ENCODE measurements at regions of chrX and their contacts with region 1.

Region 1: GRCh38 chrX:121308276-121308805 is 260.9 kb downstream of the GLUD2 start:
- DNase-seq: peak; percentile 78
- H3K4me3 Mint-ChIP-seq: peak overlapping the region; percentile 48
- H3K27ac Mint-ChIP-seq: peak overlapping the region; percentile 87
- H3K4me1 Mint-ChIP-seq: peaks cover 24% of the 10 kb centered on the region
- H3K27me3 Mint-ChIP-seq: peaks cover 2% of the 10 kb centered on the region

Region 2: DNA sequence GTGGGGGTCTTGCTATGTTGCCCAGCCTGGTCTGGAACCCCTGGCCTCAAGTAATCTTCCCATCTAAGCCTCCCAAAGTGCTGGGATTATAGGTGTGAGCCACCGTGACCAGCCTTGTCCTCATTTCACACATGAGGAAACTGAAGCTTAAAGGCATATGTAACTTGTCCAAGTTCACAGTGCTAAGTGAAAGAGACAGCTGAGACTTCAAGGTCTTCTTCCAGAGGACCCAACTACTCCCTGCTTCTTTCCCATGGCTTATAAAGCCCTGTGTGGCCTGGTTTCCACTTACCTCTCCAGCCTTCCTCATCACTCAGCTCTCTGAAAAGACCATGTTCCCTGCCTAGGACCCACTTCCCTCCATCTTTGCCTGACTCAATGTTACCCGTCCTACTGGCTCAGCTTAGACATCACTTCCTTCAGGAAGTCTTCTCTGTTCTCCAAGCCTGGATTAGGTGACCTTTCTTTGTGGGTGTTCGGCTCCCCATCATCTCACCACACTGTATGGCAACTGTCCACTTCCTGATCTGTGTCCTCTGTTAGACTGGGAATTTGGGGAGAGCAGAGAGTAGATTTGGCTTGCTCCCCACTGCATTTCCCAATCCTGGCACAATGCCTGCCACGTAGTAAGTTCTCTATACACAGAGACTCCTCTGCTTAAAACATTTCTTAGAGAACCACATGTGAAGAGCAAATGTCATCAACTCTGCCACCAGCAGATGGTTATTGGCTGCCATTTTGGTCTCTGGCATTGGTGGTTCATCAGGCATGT is 808.9 kb before region 1 on chrX:
- CTCF ChIA-PET with region 1: no interaction called
- POLR2A ChIA-PET with region 1: no interaction called
- intact Hi-C with region 1: loop called (anchors 2 kb)
- DNase-seq: no peak
- H3K4me3 Mint-ChIP-seq: no peak overlapping the region
- H3K27ac Mint-ChIP-seq: no peak overlapping the region
- H3K4me1 Mint-ChIP-seq: peaks cover 3% of the 10 kb centered on the region
- H3K27me3 Mint-ChIP-seq: no peaks in the 10 kb centered on the region

Region 3: GRCh38 chrX:120736989-120737388 is 571.4 kb before region 1 on chrX:
- CTCF ChIA-PET with region 1: no interaction called
- POLR2A ChIA-PET with region 1: no interaction called
- intact Hi-C with region 1: loop called (anchors 5 kb)
- DNase-seq: peak; percentile 19
- H3K4me3 Mint-ChIP-seq: no peak overlapping the region
- H3K27ac Mint-ChIP-seq: no peak overlapping the region
- H3K4me1 Mint-ChIP-seq: peaks cover 22% of the 10 kb centered on the region
- H3K27me3 Mint-ChIP-seq: no peaks in the 10 kb centered on the region

Region 4: DNA sequence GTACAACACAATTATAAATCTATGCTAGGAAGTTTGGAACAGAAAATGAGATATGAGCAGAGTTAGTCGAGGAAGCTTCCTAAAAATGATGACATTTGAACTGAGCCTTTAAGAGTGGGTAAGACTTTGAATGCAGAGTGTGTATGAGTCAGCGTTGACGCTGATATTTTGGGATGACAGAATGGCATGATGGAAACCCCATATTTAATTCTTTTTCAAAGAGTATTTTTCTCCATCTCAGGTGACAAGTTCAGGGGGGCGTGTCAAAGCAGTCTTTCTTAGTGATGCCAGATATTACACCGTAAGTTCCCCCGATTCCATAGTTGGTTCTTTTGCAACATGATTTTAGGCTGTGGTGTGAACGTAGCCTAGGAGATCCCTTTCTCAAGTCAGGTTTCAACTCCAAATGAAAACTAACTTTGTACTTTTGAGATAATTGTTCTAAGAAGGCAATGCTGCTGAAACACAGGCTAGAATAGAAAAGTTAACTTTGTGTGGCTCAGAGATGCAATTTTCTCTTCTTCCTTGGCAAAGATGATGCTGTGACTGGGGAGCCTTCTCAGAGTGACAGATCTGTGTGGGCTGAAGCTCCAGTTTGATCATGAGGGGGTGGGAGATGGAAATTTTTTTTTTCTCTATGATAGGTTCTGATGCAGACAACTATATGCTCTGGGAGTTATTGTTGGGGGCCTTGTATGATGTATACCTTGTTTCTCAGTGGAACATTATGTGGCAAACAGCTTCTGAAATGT is 201.7 kb before region 1 on chrX:
- CTCF ChIA-PET with region 1: no interaction called
- POLR2A ChIA-PET with region 1: no interaction called
- intact Hi-C with region 1: loop called (anchors 1 kb)
- DNase-seq: peak; percentile 8
- H3K4me3 Mint-ChIP-seq: no peak overlapping the region
- H3K27ac Mint-ChIP-seq: no peak overlapping the region
- H3K4me1 Mint-ChIP-seq: no peaks in the 10 kb centered on the region
- H3K27me3 Mint-ChIP-seq: no peaks in the 10 kb centered on the region

Region 5: DNA sequence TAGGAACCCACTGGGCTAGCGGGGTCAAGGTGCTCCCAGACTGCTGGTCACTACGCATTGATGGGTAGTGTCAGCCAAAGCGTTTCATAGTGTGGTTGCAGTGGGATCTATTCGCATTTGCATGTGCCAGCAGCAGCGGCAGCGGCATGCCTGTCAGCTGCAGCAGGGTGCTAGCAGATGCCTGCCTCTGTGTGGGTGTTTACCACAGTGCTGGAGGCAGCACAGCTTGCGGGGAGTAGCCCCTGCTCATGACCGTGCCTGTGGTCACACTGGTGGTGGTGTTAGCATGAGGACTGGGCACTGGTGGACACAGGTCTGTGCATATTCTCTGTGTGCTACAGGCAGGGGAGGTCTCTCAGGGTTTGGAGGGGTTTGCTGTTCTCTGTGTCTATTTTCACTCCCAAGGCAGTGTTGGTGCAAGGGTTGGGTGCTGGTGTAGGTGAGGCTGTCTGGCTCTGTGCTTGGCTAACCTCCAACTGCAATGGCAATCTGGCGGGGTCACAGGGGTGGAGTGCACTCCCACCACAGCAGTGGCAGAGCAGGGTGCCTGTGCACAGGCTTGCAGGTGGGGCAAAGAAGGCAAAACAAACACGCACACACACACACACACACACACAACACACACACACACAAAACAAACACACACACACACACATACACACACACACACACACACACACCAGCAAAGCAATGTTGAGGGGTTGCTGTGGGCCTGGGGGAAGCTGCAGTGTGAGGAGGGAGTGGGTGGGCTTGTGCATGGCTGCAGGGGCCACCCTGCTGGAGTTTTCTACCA is 76.6 kb before region 1 on chrX:
- CTCF ChIA-PET with region 1: no interaction called
- POLR2A ChIA-PET with region 1: no interaction called
- intact Hi-C with region 1: loop called (anchors 2 kb)
- DNase-seq: no peak
- H3K4me3 Mint-ChIP-seq: no peak overlapping the region
- H3K27ac Mint-ChIP-seq: no peak overlapping the region
- H3K4me1 Mint-ChIP-seq: peaks cover 6% of the 10 kb centered on the region
- H3K27me3 Mint-ChIP-seq: peaks cover 3% of the 10 kb centered on the region

Region 6: DNA sequence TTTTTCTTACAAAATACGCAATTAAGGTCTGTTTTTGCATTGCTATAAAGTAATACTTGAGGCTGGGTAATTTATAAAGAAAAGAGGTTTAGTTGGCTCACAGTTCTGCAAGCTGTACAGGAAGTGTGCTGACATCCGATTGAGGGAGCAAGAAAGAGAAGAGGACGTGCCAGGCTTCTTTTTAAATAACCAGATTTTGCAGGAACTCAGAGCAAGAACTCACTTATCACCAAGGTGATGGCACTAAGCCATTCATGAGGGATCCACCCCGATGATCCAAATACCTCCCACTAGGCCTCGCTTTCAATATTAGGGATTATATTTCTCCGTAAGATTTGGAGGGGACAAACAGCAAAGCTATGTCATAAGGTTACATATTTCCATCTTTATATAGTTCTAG is 195.8 kb after region 1 on chrX:
- CTCF ChIA-PET with region 1: no interaction called
- POLR2A ChIA-PET with region 1: no interaction called
- intact Hi-C with region 1: loop called (anchors 2 kb)
- DNase-seq: no peak
- H3K4me3 Mint-ChIP-seq: no peak overlapping the region
- H3K27ac Mint-ChIP-seq: no peak overlapping the region
- H3K4me1 Mint-ChIP-seq: no peaks in the 10 kb centered on the region
- H3K27me3 Mint-ChIP-seq: no peaks in the 10 kb centered on the region

Region 7: DNA sequence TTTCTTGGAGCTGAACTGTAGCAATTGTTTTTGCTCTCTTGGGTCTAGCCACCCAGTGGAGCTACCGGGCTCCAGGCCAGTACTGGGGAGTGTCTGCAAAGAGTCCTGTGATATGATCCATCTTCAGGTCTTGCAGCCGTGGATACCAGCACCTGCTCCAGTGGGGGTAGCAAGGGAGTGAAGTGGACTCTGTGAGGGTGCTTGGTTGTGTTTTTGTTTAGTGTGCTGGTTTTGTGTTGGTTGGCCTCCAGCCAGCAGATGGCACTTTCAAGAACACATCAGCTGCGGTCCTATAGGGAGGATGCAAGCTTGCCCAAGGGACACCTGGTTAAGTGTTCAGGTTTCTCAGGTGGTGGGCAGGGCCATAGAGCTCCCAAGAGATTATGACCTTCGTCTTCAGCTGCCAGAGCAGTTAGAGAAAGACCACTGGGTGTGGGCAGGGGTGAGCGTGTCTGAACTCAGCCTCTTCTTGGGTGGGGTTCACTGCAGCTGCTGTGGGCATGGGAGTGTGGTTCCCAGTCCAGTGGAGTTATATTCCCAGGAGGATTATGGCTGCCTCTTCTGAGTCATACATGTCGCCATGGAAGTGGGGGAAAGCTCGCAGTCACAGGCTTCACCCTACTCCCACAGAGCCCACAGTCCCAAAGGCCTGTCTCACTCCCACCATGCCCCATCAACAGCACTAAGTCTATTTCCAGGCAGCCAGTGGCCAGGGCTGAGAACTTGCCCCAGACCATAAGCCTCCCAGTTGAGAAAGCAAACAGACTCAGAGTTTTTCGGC is 550.7 kb after region 1 on chrX:
- CTCF ChIA-PET with region 1: no interaction called
- POLR2A ChIA-PET with region 1: no interaction called
- intact Hi-C with region 1: no loop called
- DNase-seq: no peak
- H3K4me3 Mint-ChIP-seq: no peak overlapping the region
- H3K27ac Mint-ChIP-seq: no peak overlapping the region
- H3K4me1 Mint-ChIP-seq: no peaks in the 10 kb centered on the region
- H3K27me3 Mint-ChIP-seq: no peaks in the 10 kb centered on the region

Measured in activated CD4-positive, alpha-beta memory T cell treated with anti-CD3 and anti-CD28 coated beads for 36 hours (primary cell).